Transverse colon (tissue), 4 donors: ENCODE measurements at regions of chr18 and their contacts with region 1.

Region 1: DNA sequence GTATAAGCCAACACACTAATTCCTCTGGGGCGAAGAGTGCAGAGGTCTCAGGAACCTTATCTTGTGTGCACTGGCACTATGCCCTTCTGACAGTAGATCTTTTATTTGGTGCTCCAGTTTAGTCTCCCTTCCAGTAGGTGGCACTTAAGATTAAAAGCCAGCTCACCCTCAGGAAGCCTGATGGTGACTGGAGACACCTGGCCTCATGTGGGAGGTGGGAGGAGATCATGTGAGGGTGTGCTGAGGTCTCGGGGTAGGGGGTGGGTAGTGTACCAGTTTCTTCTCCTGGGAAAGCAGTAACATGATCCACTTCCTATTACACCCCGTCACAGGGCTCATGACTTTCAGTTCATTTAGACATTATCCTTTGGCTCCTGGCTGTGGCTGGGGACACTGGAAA is 654.9 kb downstream of the ADCYAP1 start:
- DNase-seq: no peak
- H3K4me3 ChIP-seq: no peak overlapping the region
- H3K27ac ChIP-seq: no peak overlapping the region
- H3K4me1 ChIP-seq: no peaks in the 10 kb centered on the region
- H3K27me3 ChIP-seq: no peaks in the 10 kb centered on the region
- CTCF ChIP-seq: no peak
- EP300 ChIP-seq: no peak
- POLR2A ChIP-seq: no peak

Region 2: GRCh38 chr18:892316-892715 is 667.2 kb before region 1 on chr18:
- in situ Hi-C with region 1: loop called in 1 of 4 experiments (anchors 25 kb)
- intact Hi-C with region 1: no loop called
- DNase-seq: no peak
- H3K4me3 ChIP-seq: no peak overlapping the region
- H3K27ac ChIP-seq: no peak overlapping the region
- H3K4me1 ChIP-seq: no peaks in the 10 kb centered on the region
- H3K27me3 ChIP-seq: peaks cover 9% of the 10 kb centered on the region
- CTCF ChIP-seq: no peak
- EP300 ChIP-seq: no peak
- POLR2A ChIP-seq: no peak

Region 3: DNA sequence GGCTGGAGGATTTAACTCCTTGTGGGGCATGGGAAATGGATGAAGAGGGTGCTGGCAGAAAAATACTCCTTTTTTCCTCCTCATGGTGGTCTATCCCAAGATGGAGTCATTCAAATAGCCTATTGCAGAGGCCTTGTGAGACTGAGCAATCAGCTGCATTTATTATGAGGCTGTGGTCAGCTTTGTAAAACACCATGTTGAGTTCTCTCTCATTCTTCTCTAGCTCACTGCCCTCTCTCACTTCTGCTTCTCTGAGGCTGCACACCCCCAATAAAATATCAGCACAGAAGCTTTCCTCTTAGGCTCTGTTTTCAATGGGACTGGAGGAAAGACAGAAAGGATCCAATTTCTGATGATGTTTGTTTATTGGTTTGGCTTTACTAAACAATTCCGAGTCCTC is 187.8 kb before region 1 on chr18:
- in situ Hi-C with region 1: no loop called
- intact Hi-C with region 1: no loop called
- DNase-seq: no peak
- H3K4me3 ChIP-seq: no peak overlapping the region
- H3K27ac ChIP-seq: no peak overlapping the region
- H3K4me1 ChIP-seq: no peaks in the 10 kb centered on the region
- H3K27me3 ChIP-seq: no peaks in the 10 kb centered on the region
- CTCF ChIP-seq: no peak
- EP300 ChIP-seq: no peak
- POLR2A ChIP-seq: no peak

Region 4: DNA sequence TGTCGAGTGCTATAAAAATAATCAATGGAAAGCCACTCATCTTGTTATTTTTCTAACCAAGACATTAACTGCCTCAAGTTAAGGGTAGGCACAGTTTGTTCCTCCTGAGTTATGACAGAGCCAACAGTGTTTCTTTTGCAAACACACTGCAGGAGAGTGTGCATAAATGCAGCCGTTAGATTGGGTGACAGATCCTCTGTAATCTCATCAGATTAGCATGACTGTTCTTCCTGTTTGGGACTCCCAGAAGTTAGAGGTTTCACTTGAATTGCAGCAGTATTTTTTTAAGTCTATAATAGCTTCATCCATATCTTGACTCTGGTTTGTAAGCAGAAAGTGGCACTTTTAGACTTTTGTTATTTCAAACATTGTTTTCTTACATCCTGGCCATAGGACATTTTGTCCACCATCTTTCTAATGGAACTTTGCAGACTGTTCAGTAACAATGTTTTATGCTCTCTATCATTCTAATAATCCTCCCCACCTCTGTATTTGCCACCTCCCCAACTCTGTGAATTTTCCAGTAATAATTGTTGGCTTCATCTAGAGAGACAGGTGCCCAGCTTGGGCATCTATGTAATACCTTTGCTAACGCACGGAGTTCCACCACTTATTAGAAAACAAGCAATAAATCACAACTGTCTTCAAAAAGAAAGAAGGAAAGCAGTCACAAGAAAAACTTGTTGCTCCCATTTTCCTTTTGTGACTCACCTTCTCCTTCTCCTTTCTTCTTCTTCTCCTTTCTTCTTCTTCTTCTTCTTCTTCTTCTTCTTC is 94.9 kb before region 1 on chr18:
- in situ Hi-C with region 1: loop called in 1 of 4 experiments (anchors 25 kb)
- intact Hi-C with region 1: no loop called
- DNase-seq: no peak
- H3K4me3 ChIP-seq: no peak overlapping the region
- H3K27ac ChIP-seq: no peak overlapping the region
- H3K4me1 ChIP-seq: no peaks in the 10 kb centered on the region
- H3K27me3 ChIP-seq: no peaks in the 10 kb centered on the region
- CTCF ChIP-seq: no peak
- EP300 ChIP-seq: no peak
- POLR2A ChIP-seq: no peak

Region 5: DNA sequence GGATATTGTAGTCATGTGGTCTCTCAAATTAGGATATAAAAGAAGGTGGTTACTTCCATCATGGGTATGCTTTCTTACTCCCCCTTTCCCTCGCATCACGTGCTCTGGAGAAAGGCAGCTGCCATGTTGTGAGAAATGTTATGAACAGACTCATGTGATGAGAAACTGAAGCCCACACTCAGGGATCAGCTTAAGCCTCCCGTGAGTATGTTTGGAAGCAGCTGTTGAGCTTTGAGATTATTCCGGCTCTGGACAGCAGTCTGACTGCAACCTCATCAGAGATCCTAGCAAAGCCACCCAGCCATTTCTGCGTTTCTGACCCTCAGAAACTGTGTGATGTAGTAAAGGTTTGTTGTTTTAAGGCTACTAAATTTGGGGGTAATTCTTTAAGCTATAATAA is 45.2 kb after region 1 on chr18:
- in situ Hi-C with region 1: no loop called
- intact Hi-C with region 1: no loop called
- DNase-seq: no peak
- H3K4me3 ChIP-seq: no peak overlapping the region
- H3K27ac ChIP-seq: no peak overlapping the region
- H3K4me1 ChIP-seq: no peaks in the 10 kb centered on the region
- H3K27me3 ChIP-seq: no peaks in the 10 kb centered on the region
- CTCF ChIP-seq: no peak
- EP300 ChIP-seq: no peak
- POLR2A ChIP-seq: no peak

Region 6: DNA sequence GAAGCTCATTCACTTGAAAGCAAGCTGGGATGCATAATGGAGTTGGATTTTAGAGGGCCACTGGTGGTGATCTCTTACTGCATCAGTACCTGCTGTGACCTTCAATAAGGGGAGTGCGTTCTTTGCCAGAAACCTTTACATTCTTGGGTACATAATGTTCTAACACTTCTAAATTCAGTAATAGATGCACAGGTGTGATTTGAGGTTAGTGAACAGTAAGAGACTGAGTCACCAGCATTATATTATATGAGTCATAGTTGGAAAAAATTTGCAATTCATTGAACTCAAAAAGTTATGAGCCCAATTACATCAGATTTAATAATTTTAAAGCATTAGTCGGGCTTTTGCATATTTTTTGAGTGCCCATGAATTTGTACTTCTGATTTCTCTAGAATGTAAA is 148.4 kb after region 1 on chr18:
- in situ Hi-C with region 1: no loop called
- intact Hi-C with region 1: no loop called
- DNase-seq: no peak
- H3K4me3 ChIP-seq: no peak overlapping the region
- H3K27ac ChIP-seq: no peak overlapping the region
- H3K4me1 ChIP-seq: no peaks in the 10 kb centered on the region
- H3K27me3 ChIP-seq: no peaks in the 10 kb centered on the region
- CTCF ChIP-seq: no peak
- EP300 ChIP-seq: no peak
- POLR2A ChIP-seq: no peak